Heart right ventricle (tissue), 16 donors: ENCODE measurements at regions of chr1 and their contacts with region 1.

Region 1: GRCh38 chr1:47262787-47263413 is 30.9 kb upstream of the TAL1 start:
- DNase-seq: peak in 1 of 2 donors; percentile 47
- ATAC-seq: peak in 1 of 8 donors; percentile 49
- H3K4me3 ChIP-seq: no peak overlapping the region
- H3K27ac ChIP-seq: no peak overlapping the region
- H3K4me1 ChIP-seq: no peaks in the 10 kb centered on the region
- H3K27me3 ChIP-seq: no peaks in the 10 kb centered on the region
- CTCF ChIP-seq: peak; percentile 25 to 76 (median 63)

Region 2: GRCh38 chr1:47243910-47244309 is 19.0 kb before region 1 on chr1:
- intact Hi-C with region 1: loop called in 1 of 10 experiments (anchors 2 kb)
- DNase-seq: no peak
- ATAC-seq: peak in 1 of 8 donors; percentile 16
- H3K4me3 ChIP-seq: no peak overlapping the region
- H3K27ac ChIP-seq: no peak overlapping the region
- H3K4me1 ChIP-seq: peaks cover 0 to 10% (median 4%) of the 10 kb centered on the region in 9 donors
- H3K27me3 ChIP-seq: peaks cover 0 to 40% (median 16%) of the 10 kb centered on the region in 7 donors
- CTCF ChIP-seq: no peak

Region 3: GRCh38 chr1:47521034-47521881 is 258.4 kb after region 1 on chr1:
- intact Hi-C with region 1: no loop called
- DNase-seq: no peak
- ATAC-seq: peak in 2 of 8 donors; percentile 27
- H3K4me3 ChIP-seq: no peak overlapping the region
- H3K27ac ChIP-seq: no peak overlapping the region
- H3K4me1 ChIP-seq: peaks cover 0 to 6% (median 0%) of the 10 kb centered on the region in 9 donors
- H3K27me3 ChIP-seq: peaks cover 0 to 44% (median 16%) of the 10 kb centered on the region in 7 donors
- CTCF ChIP-seq: no peak